CD4-positive, alpha-beta T cell (primary cell): ENCODE measurements at regions of chr6 and their contacts with region 1.

Region 1: GRCh38 chr6:154675602-154676088 is 57.6 kb upstream of the SCAF8 start:
- DNase-seq: peak; percentile 73 to 95 (median 84)
- ATAC-seq: peak; percentile 100
- H3K4me3 ChIP-seq: no peak overlapping the region
- H3K4me3 Mint-ChIP-seq: no peak overlapping the region
- H3K27ac ChIP-seq: no peak overlapping the region
- H3K27ac Mint-ChIP-seq: no peak overlapping the region
- H3K4me1 ChIP-seq: no peaks in the 10 kb centered on the region
- H3K4me1 Mint-ChIP-seq: no peaks in the 10 kb centered on the region
- H3K27me3 ChIP-seq: no peaks in the 10 kb centered on the region
- H3K27me3 Mint-ChIP-seq: no peaks in the 10 kb centered on the region
- CTCF ChIP-seq: peak; percentile 100

Region 2: DNA sequence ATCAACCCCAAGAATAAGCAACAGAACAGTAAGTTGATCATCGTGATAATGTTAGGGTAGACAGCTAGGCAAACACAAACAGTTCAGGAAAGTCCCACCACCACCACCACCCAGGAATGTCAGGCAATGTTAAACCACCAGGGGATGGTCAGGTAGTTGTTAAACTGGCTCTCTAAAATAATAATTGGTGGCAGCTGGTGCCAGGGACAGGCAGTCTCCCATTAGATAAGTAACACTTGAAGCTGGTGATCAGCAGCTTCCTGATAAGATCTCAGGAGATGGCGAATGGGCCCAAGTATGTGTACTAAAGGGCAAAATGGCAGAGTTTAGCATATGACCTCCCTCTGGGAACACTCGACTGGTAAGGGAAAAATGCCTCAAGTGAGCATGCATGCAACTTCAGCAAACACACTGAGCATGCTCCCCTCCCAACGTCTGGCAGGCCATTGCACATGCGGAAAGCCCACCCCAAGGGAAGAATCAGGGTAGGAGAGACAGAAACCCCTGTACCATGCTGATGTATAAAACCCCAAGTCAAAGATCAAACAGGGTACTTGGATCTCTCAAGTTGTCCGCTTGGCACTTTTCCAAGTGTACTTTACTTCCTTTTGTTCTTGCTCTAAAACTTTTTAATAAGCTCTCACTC is 385.7 kb before region 1 on chr6:
- CTCF ChIA-PET with region 1: no interaction called
- POLR2A ChIA-PET with region 1: no interaction called
- intact Hi-C with region 1: loop called in 1 of 2 experiments (anchors 10 kb)
- DNase-seq: no peak
- ATAC-seq: no peak
- H3K4me3 ChIP-seq: no peak overlapping the region
- H3K4me3 Mint-ChIP-seq: no peak overlapping the region
- H3K27ac ChIP-seq: no peak overlapping the region
- H3K27ac Mint-ChIP-seq: no peak overlapping the region
- H3K4me1 ChIP-seq: no peaks in the 10 kb centered on the region
- H3K4me1 Mint-ChIP-seq: no peaks in the 10 kb centered on the region
- H3K27me3 ChIP-seq: no peaks in the 10 kb centered on the region
- H3K27me3 Mint-ChIP-seq: no peaks in the 10 kb centered on the region
- CTCF ChIP-seq: no peak

Region 3: DNA sequence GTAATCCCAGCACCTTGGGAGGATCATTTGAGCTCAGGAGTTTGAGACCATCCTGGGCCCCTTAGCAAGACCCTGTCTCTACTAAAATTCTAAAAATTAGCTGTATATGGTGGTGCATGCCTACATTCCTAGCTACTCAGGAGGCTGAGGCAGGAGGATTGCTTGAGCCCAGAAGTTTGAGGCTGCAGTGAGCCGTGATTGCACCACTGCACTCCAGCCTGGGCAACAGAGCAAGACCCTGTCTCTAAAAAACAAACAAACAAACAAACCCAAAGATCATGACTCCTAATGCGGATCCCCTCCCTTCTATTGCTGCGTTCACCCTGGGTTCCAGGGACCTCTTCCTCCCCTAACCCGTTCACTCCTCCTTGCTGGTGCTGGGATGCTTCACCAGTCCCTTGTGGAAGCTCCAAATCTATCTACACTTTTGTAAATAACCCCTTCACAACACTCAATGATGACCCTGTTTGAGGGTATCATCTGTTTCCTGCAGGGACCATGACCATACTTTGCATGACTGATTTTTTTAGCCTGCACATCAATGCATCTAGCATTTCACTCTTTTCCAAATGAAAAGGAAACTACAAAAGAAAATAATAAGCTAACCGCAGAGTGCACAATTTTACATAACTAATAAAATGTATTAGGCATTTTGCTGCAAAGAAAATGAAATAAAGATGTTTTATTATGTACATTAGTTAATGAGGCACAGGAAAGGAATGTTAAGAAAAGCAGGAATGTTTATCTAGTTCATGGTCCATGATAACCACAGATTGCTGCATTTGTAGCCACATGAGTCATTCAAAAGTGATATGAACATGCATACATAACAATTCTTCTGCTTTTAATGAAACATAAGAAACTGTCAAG is 288.6 kb before region 1 on chr6:
- CTCF ChIA-PET with region 1: no interaction called
- POLR2A ChIA-PET with region 1: no interaction called
- intact Hi-C with region 1: no loop called
- DNase-seq: no peak
- ATAC-seq: no peak
- H3K4me3 ChIP-seq: no peak overlapping the region
- H3K4me3 Mint-ChIP-seq: no peak overlapping the region
- H3K27ac ChIP-seq: no peak overlapping the region
- H3K27ac Mint-ChIP-seq: no peak overlapping the region
- H3K4me1 ChIP-seq: no peaks in the 10 kb centered on the region
- H3K4me1 Mint-ChIP-seq: no peaks in the 10 kb centered on the region
- H3K27me3 ChIP-seq: no peaks in the 10 kb centered on the region
- H3K27me3 Mint-ChIP-seq: peaks cover 20% of the 10 kb centered on the region
- CTCF ChIP-seq: no peak

Region 4: DNA sequence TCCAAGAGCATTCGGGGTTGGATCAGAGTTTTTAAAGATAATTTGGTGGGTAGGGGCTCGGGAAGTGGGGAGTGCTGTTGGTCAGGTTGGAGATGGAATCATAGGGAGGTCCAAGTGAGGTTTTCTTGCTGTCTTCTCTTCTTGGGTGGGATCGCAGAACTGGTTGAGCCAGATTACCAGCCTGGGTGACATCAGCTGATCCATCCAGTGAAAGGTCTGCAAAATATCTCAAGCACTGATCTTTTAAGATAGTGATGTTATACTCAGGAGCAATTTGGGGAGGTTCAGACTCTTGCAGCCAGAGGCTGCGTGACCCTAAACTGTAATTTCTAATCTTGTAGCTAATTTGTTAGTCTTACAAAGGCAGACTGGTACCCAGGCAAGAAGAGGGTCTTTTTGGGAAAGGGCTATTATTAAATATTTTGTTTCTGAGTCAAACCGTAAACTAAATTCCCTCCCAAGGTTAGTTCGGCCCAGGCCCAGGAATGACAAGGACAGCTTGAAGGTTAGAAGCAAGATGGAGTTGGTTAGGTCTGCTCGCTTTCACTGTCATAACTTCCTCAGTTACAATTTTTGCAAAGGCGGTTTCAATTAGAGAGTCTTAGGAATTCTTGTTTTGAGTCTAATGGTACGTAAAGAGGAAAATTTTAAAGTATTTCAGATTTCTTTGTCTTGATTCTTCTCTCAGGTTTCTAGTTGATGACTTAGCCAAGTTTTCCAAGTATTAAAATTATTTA is 110.7 kb after region 1 on chr6:
- CTCF ChIA-PET with region 1: interaction called, 5 read pairs
- POLR2A ChIA-PET with region 1: no interaction called
- intact Hi-C with region 1: loop called in 1 of 2 experiments (anchors 5 kb)
- DNase-seq: no peak
- ATAC-seq: no peak
- H3K4me3 ChIP-seq: no peak overlapping the region
- H3K4me3 Mint-ChIP-seq: no peak overlapping the region
- H3K27ac ChIP-seq: no peak overlapping the region
- H3K27ac Mint-ChIP-seq: no peak overlapping the region
- H3K4me1 ChIP-seq: peaks cover 9% of the 10 kb centered on the region
- H3K4me1 Mint-ChIP-seq: peaks cover 50% of the 10 kb centered on the region
- H3K27me3 ChIP-seq: no peaks in the 10 kb centered on the region
- H3K27me3 Mint-ChIP-seq: no peaks in the 10 kb centered on the region
- CTCF ChIP-seq: no peak

Region 5: DNA sequence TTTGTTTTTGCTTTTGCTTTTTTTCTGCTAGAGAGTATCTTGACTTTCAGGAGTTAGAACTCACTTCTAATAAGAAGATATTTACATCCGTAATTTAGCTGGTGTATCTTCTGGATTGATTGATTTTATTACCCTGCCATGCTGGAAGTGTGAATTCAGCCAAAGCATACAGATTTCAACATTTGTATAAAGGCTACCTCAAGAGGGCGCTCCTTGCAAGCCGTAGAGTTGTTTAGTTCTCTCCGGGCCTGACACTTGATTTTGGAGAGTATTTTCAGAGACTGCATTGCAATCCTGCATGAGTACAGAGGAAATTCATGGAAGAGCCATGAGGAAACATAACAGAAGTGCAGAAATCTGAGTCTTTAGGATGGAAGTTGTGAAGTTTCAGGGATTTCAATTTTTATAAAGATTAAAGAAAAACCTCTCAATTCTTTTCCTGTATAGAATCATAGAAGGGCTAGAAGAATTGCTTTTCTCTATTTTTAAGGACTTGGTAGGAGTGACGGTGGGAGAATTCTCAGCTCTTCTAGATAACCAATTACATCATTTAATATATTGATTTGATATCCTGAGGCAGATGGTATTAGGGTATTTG is 252.8 kb after region 1 on chr6:
- CTCF ChIA-PET with region 1: no interaction called
- POLR2A ChIA-PET with region 1: no interaction called
- intact Hi-C with region 1: loop called in 1 of 2 experiments (anchors 10 kb)
- DNase-seq: peak; percentile 16 to 74 (median 44)
- ATAC-seq: peak; percentile 49
- H3K4me3 ChIP-seq: no peak overlapping the region
- H3K4me3 Mint-ChIP-seq: no peak overlapping the region
- H3K27ac ChIP-seq: no peak overlapping the region
- H3K27ac Mint-ChIP-seq: no peak overlapping the region
- H3K4me1 ChIP-seq: no peaks in the 10 kb centered on the region
- H3K4me1 Mint-ChIP-seq: peaks cover 8% of the 10 kb centered on the region
- H3K27me3 ChIP-seq: no peaks in the 10 kb centered on the region
- H3K27me3 Mint-ChIP-seq: no peaks in the 10 kb centered on the region
- CTCF ChIP-seq: peak; percentile 76